ENCODE measurements at regions of chr15 and their contacts with region 1.

Region 1: GRCh38 chr15:95290176-95290974 is 1040.1 kb upstream of the NR2F2 start:
- DNase-seq: no peak
- ATAC-seq: no peak
- H3K4me3 ChIP-seq: no peak overlapping the region
- H3K27ac ChIP-seq: no peak overlapping the region
- H3K4me1 ChIP-seq: peaks cover 17% of the 10 kb centered on the region
- H3K27me3 ChIP-seq: no peaks in the 10 kb centered on the region
- CTCF ChIP-seq: no peak

Region 2: GRCh38 chr15:95277266-95277665 is 13.1 kb before region 1 on chr15:
- CTCF ChIA-PET with region 1: interaction called, 12 read pairs
- POLR2A ChIA-PET with region 1: no interaction called
- intact Hi-C with region 1: no loop called
- DNase-seq: peak; percentile 37
- ATAC-seq: no peak; the same call in 1 of the 2 replicates
- H3K4me3 ChIP-seq: no peak overlapping the region
- H3K27ac ChIP-seq: no peak overlapping the region
- H3K4me1 ChIP-seq: 0 out of 2 replicates have a peak, but pooled peaks cover 4% of the 10 kb centered on the region
- H3K27me3 ChIP-seq: no peaks in the 10 kb centered on the region
- CTCF ChIP-seq: no peak

Region 3: GRCh38 chr15:95409626-95410310 is 119.4 kb after region 1 on chr15:
- CTCF ChIA-PET with region 1: no interaction called
- POLR2A ChIA-PET with region 1: no interaction called
- intact Hi-C with region 1: no loop called
- DNase-seq: no peak
- ATAC-seq: no peak
- H3K4me3 ChIP-seq: no peak overlapping the region
- H3K27ac ChIP-seq: no peak overlapping the region
- H3K4me1 ChIP-seq: no peaks in the 10 kb centered on the region
- H3K27me3 ChIP-seq: no peaks in the 10 kb centered on the region
- CTCF ChIP-seq: no peak

Region 4: DNA sequence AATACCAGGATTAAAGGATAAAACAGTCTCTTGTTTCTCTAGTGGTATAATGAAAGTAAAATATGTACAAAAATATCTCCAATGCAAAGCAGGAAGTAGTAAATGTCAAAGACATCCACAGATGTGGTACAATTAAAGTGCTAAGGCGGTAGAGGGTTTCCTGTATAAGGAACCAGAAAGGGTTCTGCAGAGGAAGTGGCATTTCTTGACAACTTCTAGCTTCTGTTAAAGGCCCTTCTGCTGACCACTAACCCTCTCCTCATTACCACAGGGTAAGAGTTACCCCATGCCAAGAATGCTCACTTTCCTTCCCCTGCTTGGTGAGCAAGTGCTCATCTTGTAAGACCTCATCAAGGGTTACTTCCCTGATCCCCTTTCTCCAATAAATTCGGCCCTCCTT is 156.5 kb after region 1 on chr15:
- CTCF ChIA-PET with region 1: no interaction called
- POLR2A ChIA-PET with region 1: no interaction called
- intact Hi-C with region 1: no loop called
- DNase-seq: no peak
- ATAC-seq: no peak
- H3K4me3 ChIP-seq: no peak overlapping the region
- H3K27ac ChIP-seq: no peak overlapping the region
- H3K4me1 ChIP-seq: peaks cover 11% of the 10 kb centered on the region
- H3K27me3 ChIP-seq: no peaks in the 10 kb centered on the region
- CTCF ChIP-seq: no peak

Region 5: GRCh38 chr15:96457852-96458251 is 1167.5 kb after region 1 on chr15:
- CTCF ChIA-PET with region 1: interaction called, 10 read pairs
- POLR2A ChIA-PET with region 1: no interaction called
- intact Hi-C with region 1: no loop called
- DNase-seq: no peak
- ATAC-seq: no peak
- H3K4me3 ChIP-seq: no peak overlapping the region
- H3K27ac ChIP-seq: no peak overlapping the region
- H3K4me1 ChIP-seq: no peaks in the 10 kb centered on the region
- H3K27me3 ChIP-seq: peaks cover 70% of the 10 kb centered on the region
- CTCF ChIP-seq: no peak

Measured in PC-3 (cell line).